Right ventricle myocardium superior (tissue), 1 donor: ENCODE measurements at regions of chr10 and their contacts with region 1.

Region 1: DNA sequence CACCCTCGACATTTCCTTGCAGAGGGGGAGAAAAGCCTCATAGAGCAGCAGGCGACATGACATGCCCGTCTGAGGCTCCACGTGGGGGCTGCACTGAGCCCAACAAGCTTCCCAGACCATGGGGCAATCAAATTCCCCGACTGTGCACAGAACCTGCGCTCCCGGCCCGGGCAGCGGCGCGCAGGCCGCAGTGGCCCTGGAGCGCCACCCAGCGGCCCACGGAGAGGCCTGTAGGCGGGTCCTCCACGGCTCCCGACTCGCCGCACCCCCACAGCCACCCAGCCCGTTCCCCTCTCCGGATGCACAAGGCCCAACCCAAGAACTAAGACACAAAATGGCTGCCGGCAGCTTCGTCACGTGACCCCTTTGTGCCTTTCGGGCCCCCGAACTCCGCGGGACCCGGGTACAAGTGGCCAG is 816 bp downstream of the EPC1 start:
- DNase-seq: peak; percentile 97
- ATAC-seq: peak; percentile 97

Region 2: DNA sequence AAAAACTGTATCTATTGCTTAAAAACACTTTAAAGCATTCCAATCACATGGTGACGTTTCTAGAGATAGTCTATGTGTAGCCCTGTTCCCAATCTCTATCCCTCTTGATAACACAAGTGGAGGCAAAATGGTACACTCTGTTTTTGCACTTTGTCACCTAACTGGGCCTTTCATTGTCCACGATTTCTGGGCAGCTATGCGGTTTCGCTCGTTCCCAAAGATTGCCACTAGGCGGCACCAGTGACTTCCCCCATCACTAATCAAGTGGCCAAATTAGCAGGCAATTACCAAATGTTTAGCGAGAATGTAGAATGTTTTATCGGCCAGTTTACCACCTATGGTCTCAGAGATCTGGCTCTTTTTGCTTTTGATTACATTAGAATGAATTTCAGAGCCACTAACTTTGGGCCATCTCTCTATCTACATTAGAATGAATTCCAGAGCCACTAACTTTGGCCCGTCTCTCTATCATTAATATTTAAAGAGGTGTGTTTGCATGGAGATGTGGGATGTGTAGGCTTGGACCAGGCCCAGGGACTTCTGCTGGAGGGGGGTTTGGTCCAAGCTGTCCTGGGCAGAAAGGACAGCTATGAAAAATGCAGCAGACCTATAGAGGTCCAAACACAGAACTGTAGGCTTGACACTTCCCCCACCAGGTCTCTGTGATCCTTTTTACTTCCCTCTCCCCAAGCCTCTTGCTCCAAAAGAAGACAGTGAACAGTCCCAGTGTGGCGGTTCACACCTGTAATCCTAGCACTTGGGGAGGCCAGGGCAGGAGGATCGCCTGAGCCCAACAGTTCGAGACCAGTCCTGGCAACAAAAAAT is 89.3 kb before region 1 on chr10:
- intact Hi-C with region 1: loop called (anchors 5 kb)
- DNase-seq: peak; percentile 74
- ATAC-seq: peak; percentile 83

Region 3: DNA sequence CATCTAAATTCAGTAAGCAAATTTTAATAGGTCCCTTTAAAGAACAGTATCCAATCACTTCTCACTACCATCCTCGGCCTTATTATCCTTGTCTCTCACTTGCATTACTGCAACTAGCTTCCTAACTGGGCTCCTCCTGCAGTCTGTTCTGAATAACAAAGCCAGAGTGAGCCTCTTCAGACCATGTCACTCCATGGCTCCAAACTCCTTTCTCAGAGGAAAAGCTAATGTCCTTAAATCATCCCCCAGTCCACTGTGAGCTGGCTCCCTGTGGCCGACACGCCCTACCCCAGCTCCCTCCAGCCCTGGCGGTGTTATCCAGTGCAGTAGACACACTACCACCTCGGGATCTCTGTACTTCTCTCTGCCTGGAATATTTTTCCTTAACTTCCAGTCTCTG is 79.2 kb before region 1 on chr10:
- intact Hi-C with region 1: no loop called
- DNase-seq: no peak
- ATAC-seq: no peak